H1 (cell line): ENCODE measurements at regions of chr10 and their contacts with region 1.

Region 1: DNA sequence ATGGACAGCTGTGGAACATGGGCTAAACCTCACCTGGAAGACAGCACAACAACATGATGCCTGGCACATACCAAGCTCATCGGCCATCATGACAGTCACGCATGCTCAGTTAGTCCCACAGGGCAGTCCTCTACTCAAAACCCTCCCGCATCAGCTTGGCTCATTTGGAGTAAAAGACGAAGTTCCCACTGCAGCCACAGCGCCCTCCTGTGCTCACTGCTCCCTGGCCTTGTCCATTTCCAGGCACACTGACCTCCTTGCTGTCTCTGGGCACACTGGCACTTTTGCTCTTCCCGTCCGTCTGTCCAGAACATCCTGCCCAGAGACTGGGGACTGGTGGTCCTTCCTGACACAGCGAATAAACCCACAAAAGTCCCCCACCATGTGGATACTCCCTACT is 66.2 kb downstream of the LARP4B start:
- DNase-seq: peak in 1 of 2 experiments; percentile 57
- H3K4me3 ChIP-seq: no peak overlapping the region
- H3K27ac ChIP-seq: no peak overlapping the region
- H3K4me1 ChIP-seq: no peaks in the 10 kb centered on the region
- H3K27me3 ChIP-seq: no peaks in the 10 kb centered on the region
- CTCF ChIP-seq: peak; percentile 58 to 91 (median 79)
- EP300 ChIP-seq: no peak
- POLR2A ChIP-seq: no peak
- RAD21 ChIP-seq: peak; percentile 53 to 65

Region 2: DNA sequence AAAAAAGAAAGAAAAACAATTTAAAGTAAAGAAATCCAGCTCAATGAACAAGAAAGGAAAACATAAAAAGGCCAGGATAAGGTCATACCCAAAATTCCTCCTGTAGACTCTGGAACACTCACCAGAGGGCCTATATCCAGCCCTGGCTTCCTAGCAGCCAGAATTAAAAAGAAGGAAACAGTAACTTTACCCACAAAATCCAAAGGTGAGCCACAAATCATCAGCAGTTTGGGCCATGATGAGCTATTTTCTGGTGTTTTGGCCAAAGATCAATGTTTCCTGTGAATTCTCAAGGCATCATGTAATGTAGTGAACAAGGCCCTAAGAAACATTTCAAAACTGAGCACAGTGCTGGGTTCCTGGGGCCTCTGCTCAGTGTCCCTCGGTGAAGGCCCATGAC is 21.6 kb before region 1 on chr10:
- CTCF ChIA-PET with region 1: interaction called, 14 read pairs
- POLR2A ChIA-PET with region 1: no interaction called
- DNase-seq: no peak
- H3K4me3 ChIP-seq: no peak overlapping the region
- H3K27ac ChIP-seq: no peak overlapping the region
- H3K4me1 ChIP-seq: no peaks in the 10 kb centered on the region
- H3K27me3 ChIP-seq: no peaks in the 10 kb centered on the region
- CTCF ChIP-seq: no peak
- EP300 ChIP-seq: no peak
- POLR2A ChIP-seq: no peak
- RAD21 ChIP-seq: no peak

Region 3: GRCh38 chr10:876438-876837 is 11.2 kb after region 1 on chr10:
- CTCF ChIA-PET with region 1: interaction called, 11 read pairs
- POLR2A ChIA-PET with region 1: interaction called, 4 read pairs
- DNase-seq: no peak
- H3K4me3 ChIP-seq: no peak overlapping the region
- H3K27ac ChIP-seq: no peak overlapping the region
- H3K4me1 ChIP-seq: no peaks in the 10 kb centered on the region
- H3K27me3 ChIP-seq: no peaks in the 10 kb centered on the region
- CTCF ChIP-seq: no peak
- EP300 ChIP-seq: no peak
- POLR2A ChIP-seq: no peak
- RAD21 ChIP-seq: no peak

Region 4: GRCh38 chr10:1149793-1150642 is 284.8 kb after region 1 on chr10:
- CTCF ChIA-PET with region 1: no interaction called
- POLR2A ChIA-PET with region 1: no interaction called
- DNase-seq: peak in 1 of 2 experiments; percentile 33
- H3K4me3 ChIP-seq: no peak overlapping the region
- H3K27ac ChIP-seq: no peak overlapping the region; the same call in 1 of the 2 replicates
- H3K4me1 ChIP-seq: no peaks in the 10 kb centered on the region
- H3K27me3 ChIP-seq: peaks cover 0 to 2% (median 0%) of the 10 kb centered on the region in 4 experiments; a peak in 2 of 7 replicates
- CTCF ChIP-seq: no peak
- EP300 ChIP-seq: no peak
- POLR2A ChIP-seq: no peak
- RAD21 ChIP-seq: no peak